ENCODE measurements at regions of chr17 and their contacts with region 1.

Region 1: DNA sequence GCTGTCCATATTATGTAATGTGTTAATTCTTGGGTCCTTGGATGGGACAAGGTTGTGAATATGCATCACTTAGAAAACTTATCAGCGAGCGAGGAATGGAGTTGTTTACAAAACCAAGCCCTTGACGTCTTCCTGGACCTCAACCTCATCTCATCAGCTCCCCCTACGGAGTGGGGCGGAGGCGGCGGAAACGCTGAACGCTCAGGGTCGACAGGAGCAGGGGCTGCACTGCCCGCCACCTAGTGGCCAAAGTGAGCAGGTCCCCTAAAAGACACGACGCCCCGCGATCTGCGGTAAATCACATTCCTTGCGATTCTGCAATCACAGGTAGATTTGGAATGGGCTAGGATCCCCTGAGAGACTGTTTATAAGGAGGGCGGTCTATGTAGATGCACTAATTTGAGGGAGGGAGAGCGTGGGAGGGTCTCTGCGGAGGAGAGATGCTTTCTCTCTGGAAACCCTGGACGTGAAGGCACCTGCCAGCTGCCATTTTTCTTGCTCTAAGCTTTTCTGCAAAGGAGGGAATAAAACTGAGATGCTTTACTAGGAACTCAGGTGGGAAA is 5.4 kb upstream of the ICAM2 start:
- DNase-seq: peak; percentile 88 to 98 (median 94)
- ATAC-seq: peak; percentile 83 to 92
- H3K4me3 Mint-ChIP-seq: peak overlapping the region; percentile 73 to 93 (median 88)
- H3K27ac Mint-ChIP-seq: peak overlapping the region; percentile 88 to 100 (median 97)
- H3K4me1 Mint-ChIP-seq: peaks cover 19 to 67% (median 58%) of the 10 kb centered on the region in 4 donors
- H3K27me3 Mint-ChIP-seq: no peaks in the 10 kb centered on the region

Region 2: GRCh38 chr17:63919311-63919723 is 106.5 kb before region 1 on chr17:
- POLR2A ChIA-PET with region 1: interaction called, 23 read pairs
- DNase-seq: peak; percentile 48 to 83 (median 74)
- ATAC-seq: peak; percentile 92 to 96
- H3K4me3 Mint-ChIP-seq: peak overlapping the region in 1 of 10 donors; percentile 66
- H3K27ac Mint-ChIP-seq: peak overlapping the region in 7 of 10 donors; percentile 12 to 87 (median 43)
- H3K4me1 Mint-ChIP-seq: peaks cover 4 to 48% (median 9%) of the 10 kb centered on the region in 4 donors
- H3K27me3 Mint-ChIP-seq: peaks cover 0 to 5% (median 0%) of the 10 kb centered on the region in 5 donors

Region 3: GRCh38 chr17:63931099-63931561 is 94.7 kb before region 1 on chr17:
- POLR2A ChIA-PET with region 1: interaction called, 19 read pairs
- DNase-seq: peak in 9 of 10 donors; percentile 28 to 79 (median 51)
- ATAC-seq: peak; percentile 76 to 78
- H3K4me3 Mint-ChIP-seq: peak overlapping the region; percentile 87 to 94 (median 93)
- H3K27ac Mint-ChIP-seq: peak overlapping the region; percentile 53 to 94 (median 92)
- H3K4me1 Mint-ChIP-seq: peaks cover 15 to 56% (median 29%) of the 10 kb centered on the region in 4 donors
- H3K27me3 Mint-ChIP-seq: no peaks in the 10 kb centered on the region

Region 4: GRCh38 chr17:63989622-63990350 is 36.0 kb before region 1 on chr17:
- POLR2A ChIA-PET with region 1: interaction called, 13 read pairs
- DNase-seq: no peak
- ATAC-seq: no peak
- H3K4me3 Mint-ChIP-seq: peak overlapping the region in 4 of 10 donors; percentile 10 to 84 (median 73)
- H3K27ac Mint-ChIP-seq: peak overlapping the region in 6 of 10 donors; percentile 53 to 83 (median 73)
- H3K4me1 Mint-ChIP-seq: peaks cover 20 to 63% (median 43%) of the 10 kb centered on the region in 4 donors
- H3K27me3 Mint-ChIP-seq: no peaks in the 10 kb centered on the region

Region 5: DNA sequence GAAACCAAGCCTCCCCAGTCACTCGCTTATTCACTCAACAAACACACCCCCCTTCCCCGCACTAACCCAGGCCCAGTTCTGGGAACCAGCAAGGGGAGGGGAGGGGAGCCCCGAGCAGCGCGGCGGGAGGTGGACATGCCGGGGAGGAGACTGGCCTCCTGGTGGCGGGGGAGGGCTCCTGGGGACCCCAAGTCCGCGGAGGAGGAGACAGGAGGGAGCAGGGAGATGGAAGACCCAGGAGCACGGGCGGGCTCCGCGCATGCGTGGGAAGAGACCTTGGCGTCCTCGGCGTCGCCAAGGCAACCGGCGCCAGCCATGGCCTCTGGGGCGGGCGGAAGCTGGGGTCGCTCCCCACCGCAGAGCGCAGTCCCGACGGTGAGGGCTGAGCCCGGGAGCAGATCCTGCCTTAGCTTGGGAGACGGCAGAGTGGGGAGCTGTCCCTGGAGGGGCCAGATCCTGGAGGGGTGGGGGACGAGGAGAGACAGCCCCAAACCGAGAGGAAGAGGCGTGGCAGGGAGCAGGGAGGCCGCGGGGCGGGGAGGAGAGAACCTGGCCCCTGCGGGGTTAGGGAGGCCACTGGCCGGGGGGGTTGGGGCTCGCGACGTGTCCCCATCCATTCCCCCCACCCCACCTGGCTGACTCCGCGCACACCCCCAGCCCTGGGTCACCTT is 27.6 kb before region 1 on chr17 and contains the start of gene PRR29:
- POLR2A ChIA-PET with region 1: interaction called, 150 read pairs
- DNase-seq: peak; percentile 61 to 85 (median 74)
- ATAC-seq: peak; percentile 81 to 82
- H3K4me3 Mint-ChIP-seq: peak within 1 kb of the TSS; percentile 84 to 94 (median 89)
- H3K27ac Mint-ChIP-seq: peak within 1 kb of the TSS; percentile 55 to 92 (median 81)
- H3K4me1 Mint-ChIP-seq: peaks cover 13 to 46% (median 38%) of the 10 kb centered on the region in 4 donors
- H3K27me3 Mint-ChIP-seq: no peaks in the 10 kb centered on the region
- polyA plus RNA-seq, gene PRR29: 3.4 to 4.6 (median 3.7) TPM

Region 6: DNA sequence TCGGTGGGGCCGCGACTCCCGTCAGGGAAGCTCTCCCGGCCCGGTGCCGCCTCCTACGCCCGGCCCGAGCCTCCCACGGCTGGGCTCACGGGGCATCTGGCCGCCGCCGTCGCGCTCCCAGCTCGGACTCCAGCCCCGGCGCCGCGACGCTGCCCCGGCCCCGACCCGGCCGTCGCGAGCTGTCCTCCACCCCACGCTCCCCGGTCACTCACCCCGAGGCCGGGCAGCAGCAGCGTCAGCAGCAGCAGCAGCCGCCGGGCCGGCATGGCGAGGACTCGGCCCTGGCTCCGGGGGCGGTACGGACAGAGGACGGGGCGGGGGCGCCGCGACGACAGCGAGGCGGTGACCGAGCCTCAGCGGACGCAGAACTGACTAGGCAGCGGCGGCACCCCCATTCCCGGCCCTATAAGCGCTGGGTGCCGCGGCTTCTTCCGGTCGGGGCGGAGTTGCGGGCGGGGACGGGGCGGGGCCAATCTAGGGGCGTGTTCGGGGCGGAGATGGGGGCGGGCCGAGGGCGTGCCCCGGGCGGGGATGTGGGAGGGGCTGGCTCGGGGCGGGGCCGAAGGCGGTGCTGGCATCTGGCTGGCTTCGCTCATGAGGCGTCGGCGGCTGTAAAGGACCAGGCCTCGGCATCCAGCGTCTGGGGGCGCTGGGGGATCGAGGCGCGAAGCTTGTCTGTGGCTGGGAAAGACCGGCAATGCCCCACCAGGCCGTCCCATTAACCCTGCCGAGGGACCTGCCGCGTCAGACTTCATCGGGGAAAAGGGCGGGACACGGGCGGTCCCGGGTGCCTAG is 104.1 kb after region 1 on chr17 and contains the start of gene ERN1:
- POLR2A ChIA-PET with region 1: interaction called, 87 read pairs
- DNase-seq: peak; percentile 83 to 95 (median 92)
- ATAC-seq: peak; percentile 87 to 89
- H3K4me3 Mint-ChIP-seq: peak within 1 kb of the TSS; percentile 83 to 95 (median 92)
- H3K27ac Mint-ChIP-seq: peak within 1 kb of the TSS; percentile 82 to 97 (median 96)
- H3K4me1 Mint-ChIP-seq: peaks cover 11 to 54% (median 37%) of the 10 kb centered on the region in 4 donors
- H3K27me3 Mint-ChIP-seq: no peaks in the 10 kb centered on the region
- polyA plus RNA-seq, gene ERN1: 9.3 to 21.2 (median 11.5) TPM